Ascending aorta (tissue), 2 donors: ENCODE measurements at regions of chr14 and their contacts with region 1.

Region 1: GRCh38 chr14:35292051-35292769 is at the start of gene PSMA6:
- DNase-seq: peak; percentile 96 to 99
- H3K4me3 ChIP-seq: peak within 1 kb of the TSS; percentile 80 to 87
- H3K27ac ChIP-seq: peak within 1 kb of the TSS; percentile 83 to 92
- H3K4me1 ChIP-seq: peaks cover 0 to 22% of the 10 kb centered on the region in 2 donors
- H3K27me3 ChIP-seq: no peaks in the 10 kb centered on the region
- CTCF ChIP-seq: no peak
- total RNA-seq, gene PSMA6: 96.6 TPM

Region 2: GRCh38 chr14:35121887-35122695 is 170.1 kb before region 1 on chr14 and contains the starts of genes PPP2R3C and PRORP:
- intact Hi-C with region 1: loop called (anchors 5 kb)
- DNase-seq: peak; percentile 74 to 94
- H3K4me3 ChIP-seq: peak within 1 kb of the TSS; percentile 83 to 92
- H3K27ac ChIP-seq: peak within 1 kb of the TSS; percentile 91 to 98
- H3K4me1 ChIP-seq: peaks cover 3 to 18% of the 10 kb centered on the region in 2 donors
- H3K27me3 ChIP-seq: no peaks in the 10 kb centered on the region
- CTCF ChIP-seq: no peak
- total RNA-seq, gene PPP2R3C: 63.6 TPM
- total RNA-seq, gene PRORP: 42.5 TPM